ENCODE measurements at regions of chr1 and their contacts with region 1.

Region 1: GRCh38 chr1:12658531-12659453 is 14.9 kb downstream of the AADACL4 start:
- DNase-seq: peak; percentile 72 to 87 (median 74)
- H3K4me3 ChIP-seq: no peak overlapping the region
- H3K27ac ChIP-seq: no peak overlapping the region
- H3K4me1 ChIP-seq: no peaks in the 10 kb centered on the region
- H3K27me3 ChIP-seq: no peaks in the 10 kb centered on the region
- CTCF ChIP-seq: peak; percentile 88 to 99 (median 93)
- POLR2A ChIP-seq: no peak

Region 2: GRCh38 chr1:12275369-12275768 is 383.4 kb before region 1 on chr1:
- intact Hi-C with region 1: loop called in 1 of 2 experiments (anchors 10 kb)
- DNase-seq: peak in 5 of 7 donors; percentile 10 to 39 (median 34)
- H3K4me3 ChIP-seq: no peak overlapping the region
- H3K27ac ChIP-seq: no peak overlapping the region
- H3K4me1 ChIP-seq: no peaks in the 10 kb centered on the region
- H3K27me3 ChIP-seq: no peaks in the 10 kb centered on the region
- CTCF ChIP-seq: peak; percentile 31 to 62 (median 43)
- POLR2A ChIP-seq: no peak

Region 3: GRCh38 chr1:12314333-12314903 is 344.4 kb before region 1 on chr1:
- intact Hi-C with region 1: loop called (anchors 10 kb)
- DNase-seq: no peak
- H3K4me3 ChIP-seq: no peak overlapping the region
- H3K27ac ChIP-seq: peak overlapping the region in 1 of 5 donors; percentile 1
- H3K4me1 ChIP-seq: peaks cover 5 to 20% of the 10 kb centered on the region in 2 donors
- H3K27me3 ChIP-seq: no peaks in the 10 kb centered on the region
- CTCF ChIP-seq: peak; percentile 17 to 60 (median 50)
- POLR2A ChIP-seq: no peak

Region 4: GRCh38 chr1:12369258-12369657 is 289.5 kb before region 1 on chr1:
- intact Hi-C with region 1: no loop called
- DNase-seq: no peak
- H3K4me3 ChIP-seq: no peak overlapping the region
- H3K27ac ChIP-seq: no peak overlapping the region
- H3K4me1 ChIP-seq: no peaks in the 10 kb centered on the region
- H3K27me3 ChIP-seq: no peaks in the 10 kb centered on the region
- CTCF ChIP-seq: no peak
- POLR2A ChIP-seq: no peak